Heart right ventricle (tissue), 16 donors: ENCODE measurements at regions of chr13 and their contacts with region 1.

Region 1: DNA sequence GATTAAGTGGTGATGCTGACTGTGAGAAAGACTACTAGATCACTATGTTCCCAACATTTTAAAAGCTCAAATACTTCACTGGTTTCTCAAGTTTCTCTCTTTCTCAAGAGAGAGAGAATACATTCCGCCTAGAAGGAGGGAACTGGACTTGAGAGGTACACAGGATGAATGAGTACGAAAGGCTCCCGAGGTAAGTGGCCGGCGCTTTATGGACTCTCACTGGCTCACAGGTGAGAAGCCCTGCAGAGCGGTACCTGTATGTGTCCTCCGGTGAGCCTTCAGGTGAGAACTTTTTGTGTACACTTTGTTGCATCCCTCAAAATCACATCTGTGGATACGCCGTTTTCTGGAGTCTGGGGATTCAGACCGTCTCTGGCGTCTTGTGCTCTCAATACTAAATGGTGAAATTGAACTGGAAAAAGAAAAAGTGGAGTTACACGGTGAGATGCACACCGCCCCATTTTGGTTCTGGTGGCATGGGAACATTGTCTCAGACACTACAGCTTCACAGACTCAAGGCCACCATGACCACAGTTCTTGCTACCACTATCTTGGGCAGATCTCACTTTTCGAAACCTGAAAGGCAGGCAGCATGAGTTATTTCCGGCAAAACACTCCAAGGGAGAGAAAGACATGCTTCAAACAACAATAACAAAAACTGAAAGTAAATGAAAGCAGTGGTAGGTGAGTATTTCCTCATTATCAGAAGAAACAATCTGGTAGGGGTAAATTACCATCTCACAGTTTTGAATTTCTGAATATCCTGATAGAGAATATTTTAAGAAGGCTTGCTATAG is 418.9 kb downstream of the KLF12 start:
- DNase-seq: no peak
- ATAC-seq: no peak
- H3K4me3 ChIP-seq: no peak overlapping the region
- H3K27ac ChIP-seq: peak overlapping the region in 1 of 10 donors; percentile 24
- H3K4me1 ChIP-seq: peaks cover 0 to 20% (median 9%) of the 10 kb centered on the region in 9 donors
- H3K27me3 ChIP-seq: no peaks in the 10 kb centered on the region
- CTCF ChIP-seq: no peak

Region 2: GRCh38 chr13:72808917-72809500 is 906.3 kb before region 1 on chr13:
- intact Hi-C with region 1: loop called in 1 of 10 experiments (anchors 10 kb)
- DNase-seq: no peak
- ATAC-seq: no peak
- H3K4me3 ChIP-seq: no peak overlapping the region
- H3K27ac ChIP-seq: no peak overlapping the region
- H3K4me1 ChIP-seq: no peaks in the 10 kb centered on the region
- H3K27me3 ChIP-seq: no peaks in the 10 kb centered on the region
- CTCF ChIP-seq: peak; percentile 53 to 75 (median 71)

Region 3: DNA sequence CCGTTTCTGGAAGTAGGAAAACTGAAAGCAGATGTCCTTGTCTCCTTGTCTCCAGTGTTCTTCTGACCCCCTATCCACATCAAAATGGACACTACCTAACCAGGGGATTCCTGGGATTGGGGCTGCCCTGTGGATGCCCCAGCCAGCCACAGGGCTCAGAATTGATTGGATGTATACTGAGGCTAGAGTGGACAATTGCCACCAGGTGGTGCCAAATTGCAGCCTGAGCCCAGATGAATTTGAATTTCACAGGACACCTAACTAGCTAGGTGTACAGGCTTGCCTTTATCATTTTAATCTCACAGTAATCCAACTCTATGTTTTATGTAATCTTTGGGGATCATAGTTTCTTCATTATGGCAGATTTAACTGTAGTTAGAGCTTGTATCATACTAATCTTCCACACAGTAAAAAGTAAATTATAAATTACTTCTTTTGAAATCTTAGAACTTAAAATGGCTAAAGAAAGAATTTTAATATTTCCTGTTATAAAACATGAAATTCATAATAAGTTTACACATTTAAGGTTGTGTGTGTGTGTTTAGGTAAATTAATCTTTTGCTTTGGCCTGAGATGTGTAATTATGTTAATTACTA is 875.4 kb before region 1 on chr13:
- intact Hi-C with region 1: loop called in 1 of 10 experiments (anchors 10 kb)
- DNase-seq: no peak
- ATAC-seq: peak in 7 of 8 donors; percentile 33 to 74 (median 53)
- H3K4me3 ChIP-seq: no peak overlapping the region
- H3K27ac ChIP-seq: no peak overlapping the region
- H3K4me1 ChIP-seq: no peaks in the 10 kb centered on the region
- H3K27me3 ChIP-seq: no peaks in the 10 kb centered on the region
- CTCF ChIP-seq: peak in 8 of 9 donors; percentile 19 to 68 (median 56)

Region 4: GRCh38 chr13:74770361-74770760 is 1055.0 kb after region 1 on chr13:
- intact Hi-C with region 1: no loop called
- DNase-seq: no peak
- ATAC-seq: peak in 2 of 8 donors; percentile 29 to 74
- H3K4me3 ChIP-seq: no peak overlapping the region
- H3K27ac ChIP-seq: no peak overlapping the region
- H3K4me1 ChIP-seq: peaks cover 0 to 13% (median 0%) of the 10 kb centered on the region in 9 donors
- H3K27me3 ChIP-seq: no peaks in the 10 kb centered on the region
- CTCF ChIP-seq: no peak